BJ (cell line): ENCODE measurements at regions of chr14 and their contacts with region 1.

Region 1: DNA sequence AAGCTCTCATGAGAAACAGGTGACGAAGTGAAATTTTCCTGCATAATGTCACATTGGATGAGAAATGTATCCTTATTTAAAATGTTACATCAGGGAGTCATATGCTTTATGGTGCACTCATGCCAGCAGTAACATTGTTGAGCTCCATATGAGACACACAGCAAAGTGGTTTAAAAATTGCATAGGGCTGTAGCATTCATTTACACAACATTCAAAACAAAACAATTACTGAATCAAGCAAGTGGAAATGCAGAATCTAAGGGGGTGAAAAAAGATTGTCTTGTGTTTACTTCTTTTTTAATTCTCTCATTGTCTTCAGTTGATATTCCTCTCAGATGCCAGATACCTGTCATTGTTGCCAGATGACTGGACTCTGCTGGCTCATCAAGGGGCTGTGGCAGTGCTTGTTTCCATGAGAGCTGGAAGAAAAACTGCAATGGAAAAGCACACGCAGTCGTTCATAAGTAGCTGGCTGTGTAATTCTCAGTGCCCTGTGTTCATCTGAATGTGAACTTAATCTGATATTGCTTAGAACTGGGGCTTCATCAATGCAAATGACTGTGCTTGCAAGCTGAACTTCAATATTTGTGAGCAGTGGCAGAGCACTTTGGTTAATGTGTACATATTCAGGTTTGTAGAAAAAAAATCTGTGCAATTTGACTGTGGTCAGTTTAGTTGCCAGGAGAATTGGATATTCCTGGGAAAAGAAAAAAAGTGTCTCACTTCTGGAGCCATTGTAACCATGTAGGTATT is 305.6 kb downstream of the RAD51B start:
- DNase-seq: no peak
- H3K4me3 ChIP-seq: no peak overlapping the region
- H3K27me3 ChIP-seq: no peaks in the 10 kb centered on the region
- CTCF ChIP-seq: no peak

Region 2: GRCh38 chr14:68460541-68460940 is 335.4 kb after region 1 on chr14:
- CTCF ChIA-PET with region 1: no interaction called
- POLR2A ChIA-PET with region 1: interaction called, 19 read pairs
- DNase-seq: no peak
- H3K4me3 ChIP-seq: no peak overlapping the region
- H3K27me3 ChIP-seq: no peaks in the 10 kb centered on the region
- CTCF ChIP-seq: no peak